ENCODE measurements at regions of chr1 and their contacts with region 1.

Region 1: DNA sequence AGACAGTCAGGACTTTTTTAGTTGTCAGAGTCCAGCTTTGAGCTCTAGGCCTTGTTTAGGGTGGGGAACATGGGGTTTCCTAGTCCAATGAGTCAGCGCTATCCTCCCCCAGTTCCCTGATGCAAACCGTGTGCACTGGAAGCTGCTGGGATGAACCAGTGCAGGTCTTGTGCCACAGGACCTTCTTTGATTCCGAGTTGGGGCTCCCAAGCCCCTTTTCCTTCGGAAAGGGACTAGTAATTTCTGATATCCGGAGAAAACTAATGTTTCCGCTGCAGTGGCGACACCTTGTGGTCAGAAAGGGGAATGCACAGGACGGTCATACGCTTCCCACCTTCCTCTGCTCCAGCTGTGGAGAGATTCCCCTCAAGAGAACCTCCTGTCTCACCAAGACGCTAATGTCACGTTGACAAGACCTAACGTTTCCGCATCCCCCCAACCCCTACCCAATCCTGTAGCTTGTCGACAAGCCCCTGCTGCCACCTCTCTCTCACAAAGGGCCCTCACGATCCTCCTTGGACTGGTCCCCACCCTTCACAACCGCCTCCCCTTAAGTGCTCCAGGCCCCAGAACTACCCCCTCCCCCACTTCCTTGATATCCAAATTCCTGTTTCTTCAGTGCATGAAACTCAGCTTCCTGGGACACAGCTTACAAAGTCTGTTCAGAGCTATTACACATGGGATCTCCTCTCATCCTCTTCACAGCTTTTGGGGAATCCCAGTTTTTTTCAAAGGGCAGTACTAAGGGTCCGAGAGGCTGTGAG is 30.9 kb downstream of the GPA33 start:
- DNase-seq: peak; percentile 77 to 96
- H3K4me3 ChIP-seq: peak overlapping the region in 2 of 4 experiments; percentile 7 to 35; a peak in 3 of 8 replicates
- H3K27ac ChIP-seq: no peak overlapping the region
- H3K4me1 ChIP-seq: peaks cover 0 to 8% (median 2%) of the 10 kb centered on the region in 4 experiments; a peak in 4 of 7 replicates
- H3K27me3 ChIP-seq: no peaks in the 10 kb centered on the region
- CTCF ChIP-seq: peak; percentile 86 to 98 (median 92)
- EP300 ChIP-seq: no peak
- POLR2A ChIP-seq: no peak
- RAD21 ChIP-seq: peak; percentile 90 to 94

Region 2: DNA sequence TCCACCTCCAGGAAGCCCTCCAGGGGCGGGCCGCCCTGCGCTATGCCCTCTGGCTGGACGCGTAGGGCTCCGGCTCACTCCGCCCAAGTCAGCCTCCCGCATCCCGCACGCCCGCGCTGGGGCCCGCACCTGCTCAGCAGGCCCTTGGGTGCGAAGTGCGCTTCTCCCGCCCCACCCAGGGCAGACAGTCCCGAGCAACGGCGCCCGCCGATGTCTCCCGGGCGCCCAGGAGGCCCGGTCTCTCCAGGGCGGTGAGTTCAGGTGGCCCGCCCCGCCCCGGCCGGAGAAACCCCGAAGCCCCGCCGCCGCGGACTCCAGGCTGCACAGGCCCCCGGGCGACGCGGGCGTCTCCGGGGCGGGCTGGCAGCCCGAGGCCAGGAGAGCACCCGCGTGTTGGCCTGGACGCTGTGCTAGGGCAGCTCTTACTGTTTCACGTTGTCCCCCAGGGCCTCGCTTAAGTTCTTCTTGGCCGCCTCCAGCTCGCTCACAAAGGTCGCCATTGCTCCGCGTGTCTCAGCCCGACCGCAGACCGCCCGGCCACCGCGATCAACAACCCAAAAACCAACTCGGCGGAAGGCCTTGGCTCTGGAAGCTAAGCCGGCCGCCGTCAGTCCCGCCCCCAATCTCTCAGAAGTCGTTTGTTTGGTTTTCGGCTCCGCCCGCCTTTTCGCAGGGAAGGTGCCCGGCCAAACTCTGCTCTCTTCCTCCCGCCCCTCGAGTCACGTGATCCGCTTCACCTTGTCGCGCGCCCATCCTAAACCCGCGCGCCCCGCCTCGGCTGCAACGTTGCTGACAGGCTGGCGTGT is 183.3 kb before region 1 on chr1 and contains the start of gene TADA1:
- CTCF ChIA-PET with region 1: interaction called, 305 read pairs
- POLR2A ChIA-PET with region 1: interaction called, 4 read pairs
- DNase-seq: peak; percentile 94 to 95
- H3K4me3 ChIP-seq: peak within 1 kb of the TSS; percentile 70 to 87 (median 82)
- H3K27ac ChIP-seq: peak within 1 kb of the TSS; percentile 92
- H3K4me1 ChIP-seq: peaks cover 0 to 5% (median 0%) of the 10 kb centered on the region in 4 experiments; a peak in 2 of 7 replicates
- H3K27me3 ChIP-seq: no peaks in the 10 kb centered on the region
- CTCF ChIP-seq: peak; percentile 11 to 27 (median 18)
- EP300 ChIP-seq: peak in 1 of 2 experiments; percentile 11; a peak in 1 of 3 replicates
- POLR2A ChIP-seq: peak; percentile 56 to 87
- RAD21 ChIP-seq: peak in 1 of 2 experiments; percentile 15; a peak in 1 of 4 replicates
- total RNA-seq, gene TADA1: 21.1 and 24.5 TPM in 2 replicates

Region 3: GRCh38 chr1:166969074-166969677 is 90.1 kb before region 1 on chr1:
- CTCF ChIA-PET with region 1: interaction called, 43 read pairs
- POLR2A ChIA-PET with region 1: no interaction called
- DNase-seq: no peak
- H3K4me3 ChIP-seq: no peak overlapping the region
- H3K27ac ChIP-seq: no peak overlapping the region
- H3K4me1 ChIP-seq: peaks cover 0 to 9% (median under 1%) of the 10 kb centered on the region in 4 experiments; a peak in 2 of 7 replicates
- H3K27me3 ChIP-seq: peaks cover 5 to 12% (median 8%) of the 10 kb centered on the region in 4 experiments
- CTCF ChIP-seq: no peak
- EP300 ChIP-seq: no peak
- POLR2A ChIP-seq: no peak
- RAD21 ChIP-seq: no peak

Region 4: GRCh38 chr1:167076136-167076710 is 17.0 kb after region 1 on chr1:
- CTCF ChIA-PET with region 1: interaction called, 10 read pairs
- POLR2A ChIA-PET with region 1: no interaction called
- DNase-seq: no peak
- H3K4me3 ChIP-seq: no peak overlapping the region
- H3K27ac ChIP-seq: no peak overlapping the region
- H3K4me1 ChIP-seq: no peaks in the 10 kb centered on the region
- H3K27me3 ChIP-seq: no peaks in the 10 kb centered on the region; a peak in 1 of 7 replicates
- CTCF ChIP-seq: no peak
- EP300 ChIP-seq: no peak
- POLR2A ChIP-seq: no peak
- RAD21 ChIP-seq: no peak

Region 5: DNA sequence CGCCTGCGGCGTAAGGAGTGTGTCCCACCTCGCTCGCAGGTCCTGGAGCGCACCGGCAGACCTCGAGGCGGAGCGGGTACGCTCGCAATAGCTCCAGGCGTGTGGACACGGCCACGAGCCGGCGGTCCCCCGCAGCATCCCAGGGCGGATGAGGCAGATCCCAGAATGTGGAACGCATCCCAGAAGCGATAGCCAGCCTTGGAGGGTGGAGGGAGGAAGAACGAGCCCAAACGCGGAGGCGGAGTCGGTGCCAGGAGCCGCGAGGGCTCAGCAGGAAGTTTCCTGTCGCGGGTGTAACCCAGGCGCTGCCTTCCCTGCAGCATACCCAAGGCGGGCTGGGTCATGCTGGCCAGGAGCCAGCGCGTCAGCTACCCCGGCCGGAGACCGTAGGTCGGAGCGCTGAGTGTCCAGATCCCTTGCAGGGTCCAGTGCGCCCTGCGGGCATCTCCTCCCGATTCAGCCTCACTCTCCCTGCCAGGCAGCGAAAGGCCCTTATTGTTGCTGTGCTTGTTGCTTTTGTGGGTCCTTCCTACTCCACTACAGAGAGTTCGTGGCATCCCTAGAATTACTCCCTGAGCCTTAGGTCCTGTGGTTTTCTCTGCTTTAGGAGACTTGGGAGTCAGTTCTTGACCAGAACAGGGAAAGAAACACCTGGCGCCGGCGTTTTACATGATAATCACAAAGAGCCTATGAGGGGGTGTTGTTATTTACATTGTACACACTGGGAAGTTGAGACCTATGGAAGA is 62.3 kb after region 1 on chr1:
- CTCF ChIA-PET with region 1: interaction called, 45 read pairs
- POLR2A ChIA-PET with region 1: no interaction called
- DNase-seq: peak in 1 of 2 experiments; percentile 80
- H3K4me3 ChIP-seq: peak overlapping the region; percentile 39 to 64 (median 56)
- H3K27ac ChIP-seq: no peak overlapping the region
- H3K4me1 ChIP-seq: peaks cover 0 to 11% (median 3%) of the 10 kb centered on the region in 4 experiments; a peak in 5 of 7 replicates
- H3K27me3 ChIP-seq: no peaks in the 10 kb centered on the region; a peak in 2 of 7 replicates
- CTCF ChIP-seq: no peak
- EP300 ChIP-seq: no peak
- POLR2A ChIP-seq: peak in 1 of 2 experiments; percentile 36; a peak in 1 of 3 replicates
- RAD21 ChIP-seq: no peak

Region 6: DNA sequence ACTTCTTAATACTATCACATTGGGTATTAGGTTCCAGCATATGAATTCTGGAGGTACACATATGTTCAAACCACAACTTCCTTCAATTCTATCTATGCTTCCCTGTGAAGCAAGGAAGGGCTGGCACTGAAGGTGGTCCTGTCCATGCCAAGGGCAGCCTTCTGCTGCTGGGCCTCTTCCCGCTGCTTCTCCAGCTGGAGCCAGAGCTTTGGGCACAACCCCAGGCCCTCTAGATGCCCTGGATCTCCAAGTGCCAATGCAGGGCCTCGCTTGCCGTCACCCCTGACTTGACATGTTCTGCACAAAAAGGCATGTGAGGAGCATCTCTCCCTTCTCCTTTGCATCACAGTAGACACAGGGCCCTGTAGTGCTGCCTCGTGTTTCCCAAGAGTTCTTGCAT is 97.2 kb after region 1 on chr1:
- CTCF ChIA-PET with region 1: no interaction called
- POLR2A ChIA-PET with region 1: no interaction called
- DNase-seq: no peak
- H3K4me3 ChIP-seq: no peak overlapping the region
- H3K27ac ChIP-seq: no peak overlapping the region
- H3K4me1 ChIP-seq: peaks cover 2 to 20% (median 13%) of the 10 kb centered on the region in 4 experiments
- H3K27me3 ChIP-seq: peaks cover 0 to 2% (median 0%) of the 10 kb centered on the region in 4 experiments; a peak in 1 of 7 replicates
- CTCF ChIP-seq: no peak
- EP300 ChIP-seq: no peak
- POLR2A ChIP-seq: no peak
- RAD21 ChIP-seq: no peak

Region 7: GRCh38 chr1:167442124-167442848 is 383.1 kb after region 1 on chr1:
- CTCF ChIA-PET with region 1: interaction called, 13 read pairs
- POLR2A ChIA-PET with region 1: no interaction called
- DNase-seq: peak in 1 of 2 experiments; percentile 92
- H3K4me3 ChIP-seq: no peak overlapping the region
- H3K27ac ChIP-seq: no peak overlapping the region
- H3K4me1 ChIP-seq: peaks cover 2 to 8% (median 4%) of the 10 kb centered on the region in 4 experiments; a peak in 6 of 7 replicates
- H3K27me3 ChIP-seq: peaks cover 3 to 35% (median 26%) of the 10 kb centered on the region in 4 experiments
- CTCF ChIP-seq: peak; percentile 91 to 97 (median 96)
- EP300 ChIP-seq: no peak
- POLR2A ChIP-seq: no peak
- RAD21 ChIP-seq: peak; percentile 98 to 100